ENCODE measurements at regions of chr4 and their contacts with region 1.

Region 1: DNA sequence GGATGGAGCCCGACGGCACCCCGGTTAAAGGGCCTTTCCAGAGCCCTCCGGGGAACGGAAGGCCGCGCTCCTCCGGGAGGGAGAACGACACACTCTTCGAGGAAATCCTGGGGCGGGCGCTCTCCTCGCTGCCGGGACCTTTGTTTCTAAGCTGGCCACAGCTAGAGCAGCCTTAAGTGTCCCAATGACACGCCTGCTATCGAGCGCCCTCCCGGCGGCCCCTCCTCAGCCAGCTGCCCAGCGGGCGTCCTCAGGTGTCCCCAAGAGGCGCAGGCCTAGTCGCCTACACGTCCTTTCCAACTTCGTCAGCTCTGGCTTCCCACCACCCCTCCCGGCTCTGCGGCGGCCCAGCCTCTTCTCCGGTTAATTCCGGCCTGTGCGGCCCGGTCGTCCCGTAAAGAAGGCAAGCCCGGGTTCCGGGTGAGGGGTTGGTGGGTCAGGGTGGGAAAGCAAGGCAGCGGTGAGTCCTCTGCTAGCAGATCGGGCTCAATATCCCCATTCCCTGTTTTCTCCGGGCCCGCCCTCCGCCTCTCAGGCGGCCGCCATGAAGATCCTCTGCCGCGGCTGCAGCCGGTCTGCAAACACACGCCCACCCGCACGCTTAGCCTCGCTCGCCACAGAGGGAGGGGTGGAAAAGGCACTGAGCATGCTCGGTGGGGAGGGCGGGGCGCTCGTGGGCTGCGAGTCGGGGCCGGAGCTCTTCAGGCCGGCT is 449 bp upstream of the RAP1GDS1 start:
- DNase-seq: peak; percentile 89
- H3K4me3 Mint-ChIP-seq: peak overlapping the region; percentile 95
- H3K27ac Mint-ChIP-seq: peak overlapping the region; percentile 98
- H3K4me1 Mint-ChIP-seq: peaks cover 44% of the 10 kb centered on the region
- H3K27me3 Mint-ChIP-seq: no peaks in the 10 kb centered on the region

Region 2: GRCh38 chr4:98275145-98275544 is 14.4 kb after region 1 on chr4:
- intact Hi-C with region 1: loop called (anchors 2 kb)
- DNase-seq: no peak
- H3K4me3 Mint-ChIP-seq: no peak overlapping the region
- H3K27ac Mint-ChIP-seq: peak overlapping the region; percentile 62
- H3K4me1 Mint-ChIP-seq: peaks cover 25% of the 10 kb centered on the region
- H3K27me3 Mint-ChIP-seq: no peaks in the 10 kb centered on the region

Region 3: GRCh38 chr4:98293104-98293887 is 32.6 kb after region 1 on chr4:
- intact Hi-C with region 1: loop called (anchors 5 kb)
- DNase-seq: no peak
- H3K4me3 Mint-ChIP-seq: no peak overlapping the region
- H3K27ac Mint-ChIP-seq: no peak overlapping the region
- H3K4me1 Mint-ChIP-seq: peaks cover 47% of the 10 kb centered on the region
- H3K27me3 Mint-ChIP-seq: no peaks in the 10 kb centered on the region

Region 4: GRCh38 chr4:98374643-98375042 is 113.9 kb after region 1 on chr4:
- intact Hi-C with region 1: no loop called
- DNase-seq: no peak
- H3K4me3 Mint-ChIP-seq: no peak overlapping the region
- H3K27ac Mint-ChIP-seq: no peak overlapping the region
- H3K4me1 Mint-ChIP-seq: peaks cover 13% of the 10 kb centered on the region
- H3K27me3 Mint-ChIP-seq: no peaks in the 10 kb centered on the region

Region 5: DNA sequence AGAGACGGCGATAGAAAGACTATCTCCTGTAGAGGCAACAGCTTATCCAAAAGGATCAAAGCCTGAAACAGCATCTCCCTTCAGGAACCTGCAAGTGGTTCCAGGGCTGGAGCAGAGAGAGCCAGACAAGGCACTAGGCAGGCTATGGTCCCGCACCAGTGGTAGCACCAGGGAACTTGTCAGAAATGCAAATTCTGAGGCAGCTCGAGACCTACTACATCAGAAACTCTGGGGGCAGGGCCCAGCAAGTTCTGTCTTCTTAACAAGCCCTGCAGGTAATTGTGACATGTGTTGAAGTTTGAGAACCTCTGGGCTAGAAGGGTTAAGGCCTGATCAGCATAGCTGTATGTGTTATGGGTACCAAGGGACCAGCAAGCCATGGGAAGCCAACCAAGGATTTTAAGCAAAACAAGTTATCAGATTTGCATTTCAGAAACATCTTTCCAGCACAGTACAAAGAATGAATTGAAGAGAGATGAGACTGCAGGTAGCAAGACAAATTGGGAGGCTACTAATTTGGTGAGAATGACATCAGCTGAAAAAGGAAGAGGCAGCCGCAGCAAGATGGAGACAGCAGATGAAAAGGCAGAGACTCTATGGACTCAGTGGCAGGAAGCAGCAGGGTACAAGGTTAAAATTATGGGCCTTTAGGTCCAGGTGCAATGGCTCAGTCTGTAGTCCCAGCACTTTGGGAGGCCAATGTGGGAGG is 258.0 kb after region 1 on chr4:
- intact Hi-C with region 1: loop called (anchors 5 kb)
- DNase-seq: no peak
- H3K4me3 Mint-ChIP-seq: no peak overlapping the region
- H3K27ac Mint-ChIP-seq: peak overlapping the region; percentile 58
- H3K4me1 Mint-ChIP-seq: peaks cover 74% of the 10 kb centered on the region
- H3K27me3 Mint-ChIP-seq: no peaks in the 10 kb centered on the region

Region 6: GRCh38 chr4:98995183-98996055 is 734.7 kb after region 1 on chr4 and contains the start of gene METAP1:
- intact Hi-C with region 1: loop called (anchors 2 kb)
- DNase-seq: peak; percentile 94
- H3K4me3 Mint-ChIP-seq: peak within 1 kb of the TSS; percentile 91
- H3K27ac Mint-ChIP-seq: peak within 1 kb of the TSS; percentile 99
- H3K4me1 Mint-ChIP-seq: peaks cover 26% of the 10 kb centered on the region
- H3K27me3 Mint-ChIP-seq: no peaks in the 10 kb centered on the region
- total RNA-seq, gene METAP1: 58.2 and 58.7 TPM in 2 replicates